ENCODE measurements at regions of chr15 and their contacts with region 1.

Region 1: DNA sequence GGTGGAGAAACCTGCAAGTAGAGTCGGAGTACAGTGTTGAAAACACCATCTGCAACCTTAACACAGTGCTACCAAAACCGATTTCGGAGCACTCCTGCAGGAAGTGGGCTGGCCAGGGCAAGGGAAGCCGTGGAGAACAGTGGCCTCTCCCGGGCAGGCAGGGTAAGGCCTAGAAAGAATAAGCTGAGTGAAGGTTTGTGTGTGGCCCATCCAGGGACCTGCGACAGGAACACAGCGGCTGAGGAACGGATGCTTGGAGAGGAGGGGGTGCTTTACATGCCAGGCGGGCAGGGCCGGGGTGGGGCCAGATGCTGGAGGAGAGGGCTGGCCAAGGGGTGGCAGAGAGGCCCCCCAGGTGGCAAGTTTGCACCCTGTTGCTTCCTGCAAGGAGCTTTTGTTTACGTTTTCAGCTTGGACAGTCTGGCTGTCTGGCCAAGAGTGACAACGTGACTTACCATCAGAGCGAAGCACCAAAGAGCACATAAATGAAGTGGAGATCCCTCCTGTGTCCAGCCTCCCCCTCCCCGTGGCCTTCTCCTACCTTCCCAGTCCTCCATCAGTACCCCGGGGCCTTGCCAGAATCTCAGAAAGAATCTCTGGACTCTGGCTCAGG is 156.5 kb downstream of the PGPEP1L start:
- DNase-seq: peak; percentile 84 to 89
- ATAC-seq: peak; percentile 65 to 76
- H3K4me3 ChIP-seq: peak overlapping the region; percentile 47; the same call in 2 of the 3 replicates
- H3K27ac ChIP-seq: peak overlapping the region; percentile 95 to 97
- H3K4me1 ChIP-seq: peaks cover 86% of the 10 kb centered on the region
- CTCF ChIP-seq: peak; percentile 88
- EP300 ChIP-seq: peak; percentile 25 to 27; a peak in 2 of 5 replicates
- POLR2A ChIP-seq: no peak
- RAD21 ChIP-seq: peak; percentile 98

Region 2: GRCh38 chr15:98311566-98312188 is 539.4 kb before region 1 on chr15:
- CTCF ChIA-PET with region 1: no interaction called
- POLR2A ChIA-PET with region 1: no interaction called
- DNase-seq: peak; percentile 80
- ATAC-seq: peak; percentile 62 to 86; a peak in 5 of 6 replicates
- H3K4me3 ChIP-seq: no peak overlapping the region
- H3K27ac ChIP-seq: no peak overlapping the region
- H3K4me1 ChIP-seq: no peaks in the 10 kb centered on the region
- CTCF ChIP-seq: peak; percentile 93
- EP300 ChIP-seq: no peak
- POLR2A ChIP-seq: no peak
- RAD21 ChIP-seq: peak; percentile 69 to 73

Region 3: DNA sequence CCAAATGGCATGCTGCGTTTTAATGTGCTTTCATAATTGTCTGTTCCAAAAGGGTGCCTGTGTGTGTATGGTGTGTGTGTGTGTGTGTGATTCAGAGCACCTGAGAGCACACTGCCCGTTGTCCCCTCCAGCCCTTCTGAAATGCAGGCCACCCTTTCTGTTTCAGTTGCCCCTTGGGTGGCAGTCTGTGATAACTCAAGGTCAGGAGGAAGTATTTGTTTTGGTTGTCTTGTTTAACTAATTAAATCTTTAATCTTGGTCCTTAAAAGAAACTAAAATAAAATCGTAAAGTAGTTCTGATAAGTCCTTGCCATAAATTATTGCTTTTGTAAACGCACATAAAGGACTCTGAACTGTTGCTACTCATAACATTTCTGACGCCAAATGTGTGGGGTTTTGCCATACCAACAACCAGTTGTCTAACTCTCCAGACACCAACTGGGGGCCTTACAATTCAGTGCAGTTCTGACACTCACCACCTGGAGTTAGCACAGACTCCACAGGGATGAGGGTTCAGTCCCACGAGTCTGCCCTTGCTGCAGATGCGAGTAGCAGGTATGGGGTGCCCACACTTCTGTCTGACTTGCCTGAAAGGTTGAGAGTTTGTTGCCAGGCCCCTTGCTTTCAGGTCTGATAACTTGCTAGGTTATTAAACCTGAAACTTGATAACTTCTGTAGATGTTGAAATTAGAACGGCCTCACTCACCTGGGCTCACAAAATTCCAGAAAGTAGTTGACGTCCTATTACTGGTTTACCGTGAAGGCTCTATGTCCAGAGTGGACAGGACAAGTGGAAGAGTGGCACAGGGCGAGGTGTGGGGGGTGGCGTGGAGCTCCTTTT is 45.4 kb before region 1 on chr15:
- CTCF ChIA-PET with region 1: interaction called, 14 read pairs
- POLR2A ChIA-PET with region 1: no interaction called
- DNase-seq: peak in 1 of 2 experiments; percentile 61
- ATAC-seq: peak; percentile 58 to 77; a peak in 5 of 6 replicates
- H3K4me3 ChIP-seq: no peak overlapping the region
- H3K27ac ChIP-seq: peak overlapping the region; percentile 29 to 66; a peak in 5 of 6 replicates
- H3K4me1 ChIP-seq: peaks cover 66% of the 10 kb centered on the region
- CTCF ChIP-seq: no peak
- EP300 ChIP-seq: no peak
- POLR2A ChIP-seq: no peak
- RAD21 ChIP-seq: no peak

Region 4: DNA sequence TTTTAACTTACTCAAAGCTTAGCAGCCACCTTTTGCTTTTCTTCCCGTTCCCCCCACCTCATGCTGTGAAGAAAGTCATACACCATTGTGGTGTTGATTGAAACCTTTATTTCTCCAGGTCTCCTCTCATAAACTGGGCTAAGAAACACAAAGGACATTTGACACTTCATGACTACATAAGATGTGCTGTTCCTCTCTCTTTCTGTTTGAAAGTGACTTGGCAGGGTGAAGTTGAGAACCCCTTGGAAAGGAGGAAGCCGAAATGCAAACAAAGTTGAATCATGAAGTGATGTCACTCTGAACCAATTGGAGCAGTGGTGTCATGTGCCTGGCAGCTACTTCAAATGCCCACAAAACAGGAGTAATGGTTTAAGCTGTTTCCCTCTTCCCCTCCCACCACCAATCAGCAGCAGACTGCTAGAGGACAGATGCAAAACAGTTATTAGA is 28.0 kb before region 1 on chr15:
- CTCF ChIA-PET with region 1: interaction called, 12 read pairs
- POLR2A ChIA-PET with region 1: no interaction called
- DNase-seq: peak in 1 of 2 experiments; percentile 65
- ATAC-seq: peak; percentile 72 to 77
- H3K4me3 ChIP-seq: no peak overlapping the region
- H3K27ac ChIP-seq: 0 out of 6 replicates have a peak overlapping the region, but pooled peaks of 1 of the 2 experiments have one; percentile 6
- H3K4me1 ChIP-seq: peaks cover 25% of the 10 kb centered on the region
- CTCF ChIP-seq: no peak
- EP300 ChIP-seq: no peak
- POLR2A ChIP-seq: no peak
- RAD21 ChIP-seq: no peak

Region 5: DNA sequence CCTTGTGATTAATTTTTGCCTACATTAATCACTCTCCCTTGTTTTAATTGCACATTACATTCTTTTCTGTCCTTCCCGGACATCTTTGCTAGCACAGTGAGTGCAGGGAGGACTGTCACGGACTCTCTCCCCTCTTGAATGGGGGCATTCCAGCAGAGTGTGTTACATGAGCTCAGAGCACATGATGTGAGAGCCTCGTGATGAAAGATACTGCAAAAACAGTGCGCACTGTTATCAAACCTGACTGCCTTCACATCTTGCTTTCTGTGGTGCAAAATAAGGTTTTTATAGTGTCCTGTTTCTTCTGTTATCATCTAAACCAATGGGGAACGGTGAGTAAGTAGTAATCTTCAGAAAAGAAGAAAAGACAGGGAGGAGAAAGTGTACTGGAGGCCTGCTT is 11.0 kb before region 1 on chr15:
- CTCF ChIA-PET with region 1: interaction called, 25 read pairs
- POLR2A ChIA-PET with region 1: no interaction called
- DNase-seq: no peak
- ATAC-seq: no peak
- H3K4me3 ChIP-seq: no peak overlapping the region
- H3K27ac ChIP-seq: no peak overlapping the region
- H3K4me1 ChIP-seq: peaks cover 50% of the 10 kb centered on the region
- CTCF ChIP-seq: no peak
- EP300 ChIP-seq: no peak
- POLR2A ChIP-seq: no peak
- RAD21 ChIP-seq: no peak

Region 6: DNA sequence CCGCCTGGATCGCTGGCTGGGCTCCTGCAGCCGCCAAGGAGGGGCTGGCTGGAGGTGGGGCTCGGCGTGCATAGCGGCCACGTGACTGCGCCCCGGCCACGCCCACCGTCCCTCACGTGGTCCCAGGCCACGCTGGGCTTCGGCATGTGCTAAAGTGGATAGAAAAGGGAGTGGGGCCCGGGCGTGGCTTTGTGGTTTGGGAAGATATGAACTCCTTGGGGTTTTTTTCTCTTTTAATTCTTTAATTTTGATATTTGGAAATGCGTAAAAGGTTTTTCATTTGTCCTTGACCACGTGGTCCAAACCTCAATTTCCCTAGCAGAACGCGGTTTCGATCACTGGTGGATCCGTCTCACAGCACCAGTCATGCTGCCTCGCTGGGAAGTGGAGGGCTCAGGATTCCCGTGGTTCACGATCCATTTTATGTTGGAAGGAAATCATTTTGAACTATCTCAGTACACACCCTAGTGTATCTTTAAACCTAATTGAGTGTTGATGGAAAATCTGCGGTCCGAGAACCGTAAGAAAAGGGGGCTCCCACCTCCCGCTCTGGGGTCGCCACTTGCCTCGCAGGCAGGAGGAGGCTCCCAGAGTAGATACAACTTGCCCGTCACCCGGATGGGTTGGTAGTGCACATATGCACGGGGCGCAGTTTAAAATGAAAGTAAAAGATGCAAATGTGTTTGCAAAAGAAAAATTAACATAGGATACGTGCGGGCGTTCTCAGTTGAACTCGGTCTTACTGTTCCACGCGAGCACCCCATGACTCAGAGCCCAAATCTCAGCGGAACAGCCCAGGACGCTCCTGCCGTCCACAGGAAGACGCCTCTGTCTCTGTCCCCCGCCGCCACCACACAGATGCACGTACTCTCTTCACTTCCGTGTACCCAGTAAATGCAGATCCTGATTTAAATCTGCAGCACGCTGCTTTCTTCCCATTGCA is 14.6 kb after region 1 on chr15:
- CTCF ChIA-PET with region 1: interaction called, 97 read pairs
- POLR2A ChIA-PET with region 1: interaction called, 7 read pairs
- DNase-seq: peak in 1 of 2 experiments; percentile 94
- ATAC-seq: peak; percentile 76 to 82
- H3K4me3 ChIP-seq: peak overlapping the region; percentile 35
- H3K27ac ChIP-seq: peak overlapping the region; percentile 95 to 97
- H3K4me1 ChIP-seq: peaks cover 96% of the 10 kb centered on the region
- CTCF ChIP-seq: no peak
- EP300 ChIP-seq: no peak
- POLR2A ChIP-seq: peak; percentile 18
- RAD21 ChIP-seq: no peak

Region 7: DNA sequence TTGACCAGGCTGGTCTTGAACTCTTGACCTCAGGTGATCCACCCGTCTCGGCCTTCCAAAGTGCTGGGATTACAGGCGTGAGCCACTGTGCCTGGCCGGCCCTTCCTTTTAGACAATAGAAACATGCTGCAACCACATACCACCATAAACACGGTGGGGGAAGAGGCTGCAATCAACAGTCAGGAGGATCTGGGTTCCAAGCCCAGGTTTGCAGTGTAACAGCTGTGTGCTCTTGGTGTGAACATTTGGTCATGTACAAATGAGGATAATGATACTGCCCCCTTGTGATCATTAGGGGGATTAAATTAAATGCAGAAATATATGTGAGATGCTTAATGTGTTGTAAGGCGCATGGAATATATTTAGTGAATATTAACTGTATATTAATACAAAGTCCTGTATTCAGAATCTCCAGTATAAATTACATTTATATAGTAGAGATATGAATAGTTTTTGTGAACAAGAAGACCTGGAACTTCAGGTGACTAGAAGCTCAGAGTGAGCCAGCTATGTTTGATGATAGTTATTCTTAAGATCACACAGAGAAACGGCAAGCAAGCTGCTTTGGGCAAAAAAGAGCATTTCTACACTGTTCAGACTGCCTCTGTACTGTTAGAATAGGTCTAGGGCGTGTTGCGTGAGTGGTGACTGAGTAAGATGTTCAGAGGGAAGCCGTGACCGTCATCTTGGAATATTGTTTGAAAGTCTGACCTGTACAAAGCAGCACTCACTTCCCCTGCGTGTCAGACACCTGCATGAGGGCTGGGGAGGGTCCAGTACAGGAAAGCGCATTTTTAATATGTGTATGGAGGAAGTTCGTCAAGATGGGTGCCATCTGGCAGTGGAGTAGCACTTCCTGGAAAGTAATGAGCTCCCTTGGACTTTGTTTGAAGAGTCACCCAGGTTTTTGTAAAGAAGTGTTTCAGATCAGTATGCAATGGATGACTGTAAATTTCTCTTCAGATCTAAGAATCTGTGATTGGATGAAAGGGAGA is 30.8 kb after region 1 on chr15:
- CTCF ChIA-PET with region 1: interaction called, 83 read pairs
- POLR2A ChIA-PET with region 1: interaction called, 3 read pairs
- DNase-seq: peak in 1 of 2 experiments; percentile 84
- ATAC-seq: peak; percentile 33 to 51; a peak in 3 of 6 replicates
- H3K4me3 ChIP-seq: no peak overlapping the region
- H3K27ac ChIP-seq: peak overlapping the region; percentile 95 to 97
- H3K4me1 ChIP-seq: peaks cover 96% of the 10 kb centered on the region
- CTCF ChIP-seq: peak; percentile 57
- EP300 ChIP-seq: no peak
- POLR2A ChIP-seq: no peak
- RAD21 ChIP-seq: peak; percentile 69 to 72

Region 8: GRCh38 chr15:99059010-99059981 is 208.2 kb after region 1 on chr15:
- CTCF ChIA-PET with region 1: interaction called, 24 read pairs
- POLR2A ChIA-PET with region 1: no interaction called
- DNase-seq: peak; percentile 78 to 84
- ATAC-seq: peak; percentile 80 to 86
- H3K4me3 ChIP-seq: peak overlapping the region; percentile 51
- H3K27ac ChIP-seq: peak overlapping the region; percentile 87 to 95
- H3K4me1 ChIP-seq: peaks cover 14% of the 10 kb centered on the region; the same call in 2 of the 3 replicates
- CTCF ChIP-seq: peak; percentile 85
- EP300 ChIP-seq: peak in 1 of 2 experiments; percentile 47; a peak in 1 of 5 replicates
- POLR2A ChIP-seq: peak; percentile 30
- RAD21 ChIP-seq: peak; percentile 72 to 95